Activated CD8-positive, alpha-beta memory T cell treated with anti-CD3 and anti-CD28 coated beads, Interleukin-2, amount 10 ng/mL, durations not matched to agents 7 days and 5 days (primary cell): ENCODE measurements at regions of chr1 and their contacts with region 1.

Region 1: GRCh38 chr1:35030756-35031446 is 844 bp downstream of the ZMYM6 start:
- DNase-seq: peak; percentile 58
- ATAC-seq: peak; percentile 38
- H3K4me3 Mint-ChIP-seq: peak overlapping the region; percentile 96
- H3K27ac Mint-ChIP-seq: peak overlapping the region; percentile 92
- H3K4me1 Mint-ChIP-seq: peaks cover 30% of the 10 kb centered on the region
- H3K27me3 Mint-ChIP-seq: no peaks in the 10 kb centered on the region

Region 2: GRCh38 chr1:35016406-35016805 is 14.5 kb before region 1 on chr1:
- CTCF ChIA-PET with region 1: interaction called, 15 read pairs
- DNase-seq: no peak
- ATAC-seq: no peak
- H3K4me3 Mint-ChIP-seq: no peak overlapping the region
- H3K27ac Mint-ChIP-seq: no peak overlapping the region
- H3K4me1 Mint-ChIP-seq: peaks cover 1% of the 10 kb centered on the region
- H3K27me3 Mint-ChIP-seq: no peaks in the 10 kb centered on the region

Region 3: GRCh38 chr1:35261412-35262105 is 230.7 kb after region 1 on chr1:
- CTCF ChIA-PET with region 1: no interaction called
- DNase-seq: no peak
- ATAC-seq: no peak
- H3K4me3 Mint-ChIP-seq: no peak overlapping the region
- H3K27ac Mint-ChIP-seq: no peak overlapping the region
- H3K4me1 Mint-ChIP-seq: peaks cover 10% of the 10 kb centered on the region
- H3K27me3 Mint-ChIP-seq: peaks cover 17% of the 10 kb centered on the region